Natural killer cell (primary cell): ENCODE measurements at regions of chr20 and their contacts with region 1.

Region 1: DNA sequence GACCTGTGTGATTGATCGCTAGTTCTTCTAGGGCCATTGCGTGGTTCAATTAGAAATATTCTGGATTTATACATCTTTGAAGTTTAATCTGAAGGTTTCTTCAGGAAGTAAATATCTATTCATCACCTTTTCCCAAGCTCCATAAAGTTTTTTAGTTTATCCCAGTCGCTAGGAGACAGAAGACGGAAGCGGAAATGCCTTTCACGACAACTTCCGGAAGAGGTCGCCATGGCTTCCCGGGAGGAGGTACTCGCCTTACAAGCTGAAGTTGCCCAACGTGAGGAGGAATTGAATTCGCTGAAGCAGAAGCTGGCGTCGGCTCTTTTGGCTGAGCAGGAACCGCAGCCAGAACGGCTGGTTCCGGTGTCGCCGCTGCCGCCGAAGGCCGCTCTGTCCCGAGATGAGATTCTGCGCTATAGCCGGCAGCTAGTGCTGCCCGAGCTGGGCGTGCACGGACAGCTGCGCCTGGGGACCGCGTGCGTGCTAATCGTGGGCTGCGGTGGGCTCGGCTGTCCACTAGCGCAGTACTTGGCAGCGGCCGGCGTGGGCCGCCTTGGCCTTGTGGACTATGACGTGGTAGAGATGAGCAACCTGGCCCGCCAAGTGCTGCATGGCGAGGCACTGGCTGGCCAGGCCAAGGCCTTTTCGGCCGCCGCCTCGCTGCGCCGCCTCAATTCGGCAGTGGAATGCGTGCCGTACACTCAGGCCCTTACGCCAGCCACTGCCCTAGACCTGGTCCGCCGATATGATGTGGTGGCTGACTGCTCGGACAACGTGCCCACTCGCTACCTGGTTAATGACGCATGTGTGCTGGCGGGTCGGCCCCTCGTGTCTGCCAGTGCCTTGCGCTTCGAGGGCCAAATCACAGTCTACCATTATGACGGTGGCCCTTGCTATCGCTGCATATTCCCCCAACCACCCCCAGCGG is at the start of gene MOCS3:
- DNase-seq: peak; percentile 76 to 95
- ATAC-seq: peak; percentile 77 to 86 (median 84)
- H3K4me3 ChIP-seq: peak within 1 kb of the TSS; percentile 97
- H3K4me3 Mint-ChIP-seq: peak within 1 kb of the TSS; percentile 96
- H3K27ac ChIP-seq: peak within 1 kb of the TSS; percentile 99
- H3K27ac Mint-ChIP-seq: peak within 1 kb of the TSS; percentile 96 to 98
- H3K4me1 ChIP-seq: peaks cover 21% of the 10 kb centered on the region
- H3K4me1 Mint-ChIP-seq: peaks cover 38 to 39% of the 10 kb centered on the region in 2 donors
- H3K27me3 ChIP-seq: no peaks in the 10 kb centered on the region
- H3K27me3 Mint-ChIP-seq: no peaks in the 10 kb centered on the region
- CTCF ChIP-seq: no peak
- total RNA-seq, gene MOCS3: 2.2 to 2.5 (median 2.3) TPM

Region 2: GRCh38 chr20:50790651-50791277 is 168.1 kb before region 1 on chr20:
- intact Hi-C with region 1: loop called (anchors 2 kb)
- DNase-seq: peak; percentile 67 to 88
- ATAC-seq: peak; percentile 54 to 58 (median 56)
- H3K4me3 ChIP-seq: peak overlapping the region; percentile 23
- H3K4me3 Mint-ChIP-seq: peak overlapping the region; percentile 42
- H3K27ac ChIP-seq: peak overlapping the region; percentile 81
- H3K27ac Mint-ChIP-seq: peak overlapping the region in 1 of 2 donors; percentile 69
- H3K4me1 ChIP-seq: peaks cover 25% of the 10 kb centered on the region
- H3K4me1 Mint-ChIP-seq: peaks cover 5 to 13% of the 10 kb centered on the region in 2 donors
- H3K27me3 ChIP-seq: no peaks in the 10 kb centered on the region
- H3K27me3 Mint-ChIP-seq: peaks cover 0 to 5% of the 10 kb centered on the region in 2 donors
- CTCF ChIP-seq: peak; percentile 59

Region 3: DNA sequence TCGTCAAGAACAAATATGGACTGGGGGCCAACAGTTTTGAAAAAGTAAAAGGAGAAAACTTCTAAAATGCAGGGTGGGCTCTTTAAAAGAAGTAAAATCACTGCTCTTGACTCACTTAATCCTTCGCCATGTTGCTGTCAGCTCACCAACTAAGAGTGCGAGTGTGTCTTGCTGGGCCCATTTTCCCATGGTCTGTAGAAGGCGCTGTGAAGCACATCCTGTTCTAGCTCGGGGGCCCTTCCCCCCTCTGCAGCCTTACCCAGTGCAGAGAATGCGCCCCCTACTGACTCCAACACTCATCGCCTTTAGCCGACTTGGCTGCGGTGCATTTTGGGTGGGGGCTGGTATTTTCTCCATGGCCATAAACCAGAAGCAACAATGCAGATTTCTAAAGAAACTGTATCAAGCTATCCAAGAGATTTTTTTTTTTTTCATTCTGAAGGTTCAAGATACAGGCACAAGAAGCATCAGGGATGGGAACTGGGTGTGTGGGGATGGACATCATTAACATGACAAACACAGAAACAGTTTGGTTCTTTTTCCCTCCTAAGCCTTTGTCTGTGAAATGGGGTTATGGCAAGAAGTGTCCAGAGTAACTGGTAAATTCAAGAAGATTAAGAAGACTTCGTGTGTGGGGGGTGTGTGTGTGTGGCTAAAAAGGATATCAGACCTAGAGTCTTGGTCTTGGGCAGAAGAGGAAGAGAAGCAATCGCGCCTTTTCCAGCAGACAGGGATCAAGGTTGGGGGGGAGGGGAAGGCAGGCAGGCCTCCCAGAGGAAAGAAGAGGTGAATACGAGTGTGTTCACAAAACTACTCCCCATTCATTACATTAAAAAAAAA is 29.4 kb before region 1 on chr20:
- intact Hi-C with region 1: loop called (anchors 1 kb)
- DNase-seq: peak; percentile 83 to 97
- ATAC-seq: peak; percentile 62 to 86 (median 66)
- H3K4me3 ChIP-seq: peak overlapping the region; percentile 70
- H3K4me3 Mint-ChIP-seq: peak overlapping the region; percentile 95
- H3K27ac ChIP-seq: peak overlapping the region; percentile 34
- H3K27ac Mint-ChIP-seq: peak overlapping the region; percentile 90 to 98
- H3K4me1 ChIP-seq: peaks cover 24% of the 10 kb centered on the region
- H3K4me1 Mint-ChIP-seq: peaks cover 45% of the 10 kb centered on the region in 2 donors
- H3K27me3 ChIP-seq: no peaks in the 10 kb centered on the region
- H3K27me3 Mint-ChIP-seq: no peaks in the 10 kb centered on the region
- CTCF ChIP-seq: peak; percentile 91

Region 4: DNA sequence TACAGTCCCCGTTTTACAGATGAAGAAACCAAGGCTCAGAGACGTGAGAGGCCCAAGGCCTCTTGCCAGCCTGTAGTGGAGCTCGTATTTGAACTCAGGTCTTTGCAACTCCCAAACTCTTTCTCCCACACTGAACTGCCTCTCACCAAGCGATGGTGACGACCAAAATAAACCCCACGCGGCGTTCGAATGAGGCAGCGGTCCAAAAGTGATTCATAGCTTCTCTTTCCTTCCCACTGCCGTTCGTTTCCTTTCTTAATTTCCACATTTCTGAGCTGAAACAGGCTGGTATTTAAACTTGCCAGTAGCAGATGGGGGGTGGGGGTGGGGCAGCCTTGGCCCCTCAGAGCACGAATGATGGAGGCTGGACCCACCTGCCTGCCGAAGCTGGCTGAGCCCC is 316.9 kb after region 1 on chr20:
- intact Hi-C with region 1: no loop called
- DNase-seq: no peak
- ATAC-seq: no peak
- H3K4me3 ChIP-seq: no peak overlapping the region
- H3K4me3 Mint-ChIP-seq: no peak overlapping the region
- H3K27ac ChIP-seq: no peak overlapping the region
- H3K27ac Mint-ChIP-seq: no peak overlapping the region
- H3K4me1 ChIP-seq: no peaks in the 10 kb centered on the region
- H3K4me1 Mint-ChIP-seq: no peaks in the 10 kb centered on the region
- H3K27me3 ChIP-seq: no peaks in the 10 kb centered on the region
- H3K27me3 Mint-ChIP-seq: peaks cover 34 to 36% of the 10 kb centered on the region in 2 donors
- CTCF ChIP-seq: no peak